MCF 10A (cell line): ENCODE measurements at regions of chr1 and their contacts with region 1.

Region 1: GRCh38 chr1:3785456-3786157 is 10.7 kb downstream of the LRRC47 start:
- DNase-seq: no peak
- H3K4me3 Mint-ChIP-seq: no peak overlapping the region
- H3K27ac Mint-ChIP-seq: no peak overlapping the region
- H3K4me1 Mint-ChIP-seq: peaks cover 4% of the 10 kb centered on the region
- H3K27me3 Mint-ChIP-seq: no peaks in the 10 kb centered on the region
- CTCF ChIP-seq: peak; percentile 20

Region 2: GRCh38 chr1:3649342-3650247 is 136.0 kb before region 1 on chr1 and contains the start of gene WRAP73:
- CTCF ChIA-PET with region 1: no interaction called
- POLR2A ChIA-PET with region 1: no interaction called
- intact Hi-C with region 1: no loop called
- DNase-seq: peak; percentile 87
- H3K4me3 Mint-ChIP-seq: peak within 1 kb of the TSS; percentile 72
- H3K27ac Mint-ChIP-seq: no peak within 1 kb of the TSS
- H3K4me1 Mint-ChIP-seq: peaks cover 7% of the 10 kb centered on the region
- H3K27me3 Mint-ChIP-seq: no peaks in the 10 kb centered on the region
- CTCF ChIP-seq: no peak
- total RNA-seq, gene WRAP73: 25.3 and 29.8 TPM in 2 replicates

Region 3: DNA sequence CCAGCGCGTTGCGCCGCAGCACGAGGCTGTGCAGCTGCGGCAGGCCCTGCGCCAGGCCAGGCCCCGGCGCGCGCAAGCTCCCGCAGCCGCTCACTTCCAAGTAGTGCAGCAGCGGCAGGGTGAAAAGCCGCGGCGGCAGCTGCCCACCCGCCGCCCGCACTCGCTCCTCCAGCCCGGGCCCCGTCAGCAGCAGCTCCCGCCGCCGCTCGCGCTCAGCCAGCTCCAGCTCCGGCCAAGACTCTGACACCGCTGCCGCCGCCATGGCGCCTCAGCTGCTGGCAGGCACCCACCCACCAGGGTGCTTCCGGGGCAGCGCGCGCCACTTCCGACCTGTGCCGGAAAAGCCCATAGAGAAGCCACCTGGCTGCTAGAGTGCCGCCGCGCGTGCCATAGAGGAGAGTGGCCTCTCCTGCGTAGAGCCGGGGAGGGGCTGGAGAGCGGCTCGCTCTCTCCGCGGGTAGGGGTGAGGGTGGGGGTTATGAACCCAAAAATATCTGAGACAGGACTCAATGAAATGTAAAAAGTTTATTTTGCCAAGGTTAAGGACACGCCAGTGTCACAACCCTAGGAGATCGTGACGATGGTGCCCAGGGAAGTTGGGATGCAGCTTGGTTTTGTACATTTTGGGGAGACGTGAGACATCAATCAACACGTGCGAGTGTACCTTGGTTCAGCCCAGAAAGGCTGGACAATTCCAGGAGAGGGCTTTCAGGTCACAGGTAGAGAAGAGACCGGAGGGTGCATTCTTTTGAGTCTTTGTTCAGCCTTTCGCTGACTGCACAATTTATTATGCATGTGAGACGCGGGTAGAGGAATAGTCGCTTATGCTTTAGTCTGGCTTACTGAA is 10.8 kb after region 1 on chr1 and contains the start of gene LRRC47:
- CTCF ChIA-PET with region 1: interaction called, 3 read pairs
- POLR2A ChIA-PET with region 1: interaction called, 20 read pairs
- intact Hi-C with region 1: no loop called
- DNase-seq: peak; percentile 92
- H3K4me3 Mint-ChIP-seq: peak within 1 kb of the TSS; percentile 94
- H3K27ac Mint-ChIP-seq: peak within 1 kb of the TSS; percentile 89
- H3K4me1 Mint-ChIP-seq: peaks cover 19% of the 10 kb centered on the region
- H3K27me3 Mint-ChIP-seq: peaks cover 5% of the 10 kb centered on the region
- CTCF ChIP-seq: no peak
- total RNA-seq, gene LRRC47: 46.1 and 53.0 TPM in 2 replicates

Region 4: DNA sequence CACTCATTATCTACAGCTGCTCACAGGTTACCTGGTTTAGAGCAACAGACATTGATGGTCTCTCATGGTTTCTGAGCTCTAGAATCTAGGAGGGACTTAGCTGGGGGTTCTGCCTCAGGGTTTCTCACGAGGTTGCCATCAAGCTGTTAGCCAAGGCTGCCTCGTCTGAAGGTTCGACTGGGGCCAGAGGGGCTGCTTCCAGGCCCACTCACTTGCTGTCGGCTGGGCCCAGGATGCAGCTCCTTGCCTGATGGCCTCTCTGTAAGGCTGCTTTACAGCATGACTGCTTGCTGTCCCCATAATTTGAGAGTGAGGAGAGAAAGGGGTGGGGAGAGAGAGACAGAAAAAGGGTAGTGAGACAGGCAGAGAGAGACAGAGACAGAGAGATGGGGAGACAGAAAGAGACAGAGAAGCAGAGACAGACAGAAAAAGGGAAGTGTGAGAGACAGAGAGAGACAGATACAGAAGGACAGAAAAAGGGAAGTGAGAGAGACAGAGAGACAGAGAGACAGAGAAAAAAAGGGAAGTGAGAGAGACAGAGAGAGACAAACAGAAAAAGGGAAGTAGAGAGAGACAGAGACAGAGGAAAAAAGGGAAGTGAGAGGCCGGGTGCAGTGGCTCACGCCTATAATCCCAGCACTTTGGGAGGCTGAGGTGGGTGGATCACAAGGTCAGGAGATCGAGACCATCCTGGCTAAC is 221.2 kb after region 1 on chr1:
- CTCF ChIA-PET with region 1: no interaction called
- POLR2A ChIA-PET with region 1: no interaction called
- intact Hi-C with region 1: no loop called
- DNase-seq: no peak
- H3K4me3 Mint-ChIP-seq: no peak overlapping the region
- H3K27ac Mint-ChIP-seq: no peak overlapping the region
- H3K4me1 Mint-ChIP-seq: no peaks in the 10 kb centered on the region
- H3K27me3 Mint-ChIP-seq: no peaks in the 10 kb centered on the region
- CTCF ChIP-seq: no peak